Heart left ventricle (tissue), 16 donors: ENCODE measurements at regions of chr17 and their contacts with region 1.

Region 1: DNA sequence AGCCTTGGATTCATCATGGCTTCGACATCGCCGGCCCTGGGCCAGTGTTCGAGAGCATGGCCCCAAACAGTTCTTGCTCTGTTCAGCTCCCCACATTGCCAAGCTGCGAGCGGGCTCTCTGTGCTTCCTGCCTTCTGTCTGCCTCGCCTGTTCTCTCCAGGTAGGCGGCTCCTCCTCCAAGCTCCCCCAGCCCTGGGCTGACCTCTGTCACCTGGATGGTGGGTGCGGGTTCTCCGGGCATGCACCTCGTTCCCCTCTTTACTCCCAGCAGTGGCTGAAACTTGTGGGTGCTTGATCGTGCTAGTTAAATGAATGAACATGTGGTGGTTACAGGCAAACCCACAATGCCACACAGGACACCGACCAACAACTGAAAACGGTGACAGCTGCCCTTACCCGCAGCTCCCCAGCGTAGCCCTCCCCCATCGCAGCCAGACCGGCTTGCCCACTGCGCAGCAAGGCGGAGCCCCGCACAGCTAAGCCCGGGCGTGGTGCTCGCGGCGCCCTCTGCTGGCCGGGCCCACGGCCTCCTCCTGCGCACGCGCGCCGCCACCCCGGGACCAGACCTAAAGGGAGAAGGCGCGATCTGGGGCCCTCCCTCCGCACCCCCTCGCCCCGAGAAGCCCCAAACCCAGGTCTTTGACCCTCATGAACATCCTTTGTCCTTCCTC is 23.0 kb upstream of the EIF1 start:
- DNase-seq: peak; percentile 87 to 95 (median 90)
- ATAC-seq: peak; percentile 86 to 94 (median 93)
- H3K4me3 ChIP-seq: peak overlapping the region; percentile 27 to 70 (median 51)
- H3K27ac ChIP-seq: peak overlapping the region; percentile 30 to 87 (median 76)
- H3K4me1 ChIP-seq: peaks cover 0 to 36% (median 14%) of the 10 kb centered on the region in 12 donors
- H3K27me3 ChIP-seq: no peaks in the 10 kb centered on the region
- CTCF ChIP-seq: peak; percentile 89 to 99 (median 98)
- POLR2A ChIP-seq: peak in 1 of 2 donors; percentile 57

Region 2: GRCh38 chr17:40615295-40615988 is 1050.3 kb before region 1 on chr17:
- intact Hi-C with region 1: loop called in 1 of 10 experiments (anchors 10 kb)
- DNase-seq: peak in 1 of 5 donors; percentile 39
- ATAC-seq: peak in 2 of 4 donors; percentile 43 to 45
- H3K4me3 ChIP-seq: no peak overlapping the region
- H3K27ac ChIP-seq: peak overlapping the region in 1 of 12 donors; percentile 32
- H3K4me1 ChIP-seq: peaks cover 0 to 25% (median 0%) of the 10 kb centered on the region in 12 donors
- H3K27me3 ChIP-seq: peaks cover 0 to 47% (median 4%) of the 10 kb centered on the region in 9 donors
- CTCF ChIP-seq: peak in 9 of 12 donors; percentile 7 to 42 (median 24)
- POLR2A ChIP-seq: no peak

Region 3: DNA sequence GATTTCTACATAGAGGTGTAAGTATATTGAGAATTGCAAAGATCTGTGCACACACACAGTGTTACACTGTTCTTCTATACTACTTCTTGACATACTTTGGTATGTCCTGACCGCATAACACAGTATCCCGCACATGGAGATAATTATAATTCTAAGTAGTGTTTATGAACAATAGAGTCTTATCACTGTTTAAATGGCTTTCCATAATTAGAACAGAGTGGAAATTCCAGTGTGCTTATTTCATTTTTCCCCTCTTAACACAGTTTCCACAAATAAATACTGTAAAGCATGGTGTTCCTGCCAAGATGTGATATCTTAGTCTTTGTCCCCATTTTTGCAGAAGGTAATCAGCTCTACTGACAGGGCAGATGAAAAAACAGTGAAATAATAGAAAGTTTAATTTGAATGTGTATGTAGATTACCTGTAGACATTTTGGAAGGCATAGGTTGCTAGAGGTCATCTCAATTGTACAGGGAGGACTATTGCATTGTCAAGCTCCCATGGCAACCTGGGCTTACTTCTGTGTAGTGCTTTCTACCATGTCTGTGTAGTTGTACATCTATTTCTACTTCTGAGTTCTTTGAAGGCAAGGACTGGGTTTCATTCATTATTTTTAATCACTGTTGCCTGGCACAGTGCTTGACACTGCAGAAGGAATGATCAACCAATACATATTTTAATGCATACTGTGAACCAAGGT is 855.8 kb before region 1 on chr17:
- intact Hi-C with region 1: loop called in 2 of 10 experiments (anchors 5 to 10 kb)
- DNase-seq: no peak
- ATAC-seq: peak; percentile 36 to 84 (median 76)
- H3K4me3 ChIP-seq: no peak overlapping the region
- H3K27ac ChIP-seq: peak overlapping the region in 9 of 12 donors; percentile 4 to 56 (median 25)
- H3K4me1 ChIP-seq: peaks cover 0 to 25% (median 16%) of the 10 kb centered on the region in 12 donors
- H3K27me3 ChIP-seq: peaks cover 0 to 43% (median 0%) of the 10 kb centered on the region in 9 donors
- CTCF ChIP-seq: no peak
- POLR2A ChIP-seq: no peak

Region 4: DNA sequence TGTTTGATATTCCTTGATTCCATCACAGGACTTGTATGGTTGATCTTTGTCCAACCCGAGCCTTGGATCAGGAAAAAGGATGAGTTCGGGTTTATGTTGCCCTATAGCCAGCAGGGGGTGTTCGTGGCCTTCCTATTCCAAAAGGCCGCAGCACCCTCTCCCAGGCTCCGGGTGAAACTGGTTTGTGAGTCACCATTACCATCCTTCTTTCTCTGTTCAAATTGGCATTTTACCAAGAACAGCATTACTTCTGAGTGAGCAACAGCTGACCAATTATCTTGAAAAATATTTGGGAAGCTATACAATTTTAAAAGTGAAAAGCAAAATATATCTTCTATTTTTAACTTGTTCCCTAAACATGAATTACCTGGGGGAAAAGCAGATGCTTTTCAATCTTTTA is 756.4 kb before region 1 on chr17:
- intact Hi-C with region 1: loop called (anchors 1 to 5 kb)
- DNase-seq: peak in 4 of 5 donors; percentile 64 to 77 (median 68)
- ATAC-seq: peak; percentile 73 to 97 (median 90)
- H3K4me3 ChIP-seq: no peak overlapping the region
- H3K27ac ChIP-seq: no peak overlapping the region
- H3K4me1 ChIP-seq: peaks cover 0 to 14% (median 0%) of the 10 kb centered on the region in 12 donors
- H3K27me3 ChIP-seq: peaks cover 0 to 23% (median 7%) of the 10 kb centered on the region in 9 donors
- CTCF ChIP-seq: peak; percentile 50 to 80 (median 70)
- POLR2A ChIP-seq: no peak

Region 5: DNA sequence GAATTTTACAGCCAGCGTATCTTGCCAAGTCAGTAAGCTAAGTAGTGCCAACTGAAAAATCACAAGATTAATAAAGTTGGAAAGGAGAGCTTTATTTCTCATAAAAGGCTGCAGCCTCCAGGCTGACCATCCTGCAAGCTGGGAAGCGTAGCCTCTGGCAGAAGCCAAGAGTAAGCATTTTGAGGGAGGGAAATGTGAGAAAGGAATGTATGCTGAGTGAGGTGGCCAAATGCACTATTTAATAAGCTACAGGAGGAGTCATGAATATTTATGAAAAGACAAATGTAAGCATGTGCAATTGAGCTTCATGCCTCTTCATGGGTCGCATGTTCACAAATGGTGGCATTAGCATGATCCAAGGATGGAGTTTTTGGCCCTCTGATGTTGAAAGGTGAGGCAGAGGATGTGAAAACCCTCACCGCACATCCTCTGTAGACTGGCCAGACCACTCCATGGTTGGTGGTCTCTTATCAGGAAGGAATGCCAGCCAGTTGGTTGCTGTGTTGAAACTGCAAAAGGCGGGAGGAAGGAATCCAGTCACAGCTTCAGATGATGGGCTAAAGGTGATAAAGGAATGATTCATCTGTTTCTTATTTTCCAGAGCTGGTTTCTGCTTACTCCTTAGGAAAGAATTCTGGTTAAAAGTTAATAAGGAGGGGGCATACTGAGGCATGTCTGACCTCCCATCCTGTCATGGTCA is 305.3 kb before region 1 on chr17:
- intact Hi-C with region 1: no loop called
- DNase-seq: no peak
- ATAC-seq: no peak
- H3K4me3 ChIP-seq: no peak overlapping the region
- H3K27ac ChIP-seq: no peak overlapping the region
- H3K4me1 ChIP-seq: no peaks in the 10 kb centered on the region
- H3K27me3 ChIP-seq: peaks cover 0 to 7% (median 0%) of the 10 kb centered on the region in 9 donors
- CTCF ChIP-seq: no peak
- POLR2A ChIP-seq: no peak

Region 6: GRCh38 chr17:41403798-41404671 is 261.7 kb before region 1 on chr17:
- intact Hi-C with region 1: loop called in 1 of 10 experiments (anchors 10 kb)
- DNase-seq: peak in 1 of 5 donors; percentile 22
- ATAC-seq: peak in 3 of 4 donors; percentile 67 to 85 (median 80)
- H3K4me3 ChIP-seq: no peak overlapping the region
- H3K27ac ChIP-seq: no peak overlapping the region
- H3K4me1 ChIP-seq: peaks cover 0 to 9% (median 0%) of the 10 kb centered on the region in 12 donors
- H3K27me3 ChIP-seq: no peaks in the 10 kb centered on the region
- CTCF ChIP-seq: no peak
- POLR2A ChIP-seq: no peak

Region 7: GRCh38 chr17:41579484-41580243 is 86.0 kb before region 1 on chr17:
- intact Hi-C with region 1: loop called in 1 of 10 experiments (anchors 1 kb)
- DNase-seq: peak; percentile 59 to 71 (median 65)
- ATAC-seq: peak; percentile 79 to 88 (median 86)
- H3K4me3 ChIP-seq: no peak overlapping the region
- H3K27ac ChIP-seq: no peak overlapping the region
- H3K4me1 ChIP-seq: no peaks in the 10 kb centered on the region
- H3K27me3 ChIP-seq: peaks cover under 1 to 44% (median 5%) of the 10 kb centered on the region in 9 donors
- CTCF ChIP-seq: peak; percentile 53 to 84 (median 74)
- POLR2A ChIP-seq: no peak